ENCODE measurements at regions of chr22 and their contacts with region 1.

Region 1: GRCh38 chr22:34914846-34915245 is 151.1 kb upstream of the ISX start:
- DNase-seq: no peak
- ATAC-seq: no peak
- H3K4me3 ChIP-seq: no peak overlapping the region
- H3K27ac ChIP-seq: no peak overlapping the region
- H3K4me1 ChIP-seq: no peaks in the 10 kb centered on the region
- H3K27me3 ChIP-seq: peaks cover 0 to 14% (median 5%) of the 10 kb centered on the region in 7 donors
- CTCF ChIP-seq: no peak

Region 2: DNA sequence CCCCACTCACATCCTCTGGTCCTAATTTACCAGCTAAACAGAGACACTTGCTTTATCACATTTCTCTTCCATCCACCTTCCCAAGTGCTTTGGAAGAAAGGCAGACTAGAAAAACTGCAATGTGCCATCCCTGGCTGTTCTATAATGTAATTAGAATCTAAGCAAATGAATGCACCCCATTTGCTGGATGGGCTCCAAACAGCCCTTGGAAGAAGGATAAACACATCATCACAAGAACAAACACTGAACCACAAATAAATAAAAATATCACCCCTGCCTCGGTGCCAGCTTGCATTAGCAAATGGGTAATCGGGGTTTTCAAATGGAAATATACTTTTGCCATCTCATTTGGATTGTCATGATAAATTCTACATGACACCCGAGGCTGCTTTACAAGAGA is 145.5 kb before region 1 on chr22:
- intact Hi-C with region 1: no loop called
- DNase-seq: no peak
- ATAC-seq: no peak
- H3K4me3 ChIP-seq: no peak overlapping the region
- H3K27ac ChIP-seq: no peak overlapping the region
- H3K4me1 ChIP-seq: no peaks in the 10 kb centered on the region
- H3K27me3 ChIP-seq: peaks cover 0 to 19% (median 4%) of the 10 kb centered on the region in 7 donors
- CTCF ChIP-seq: no peak

Region 3: DNA sequence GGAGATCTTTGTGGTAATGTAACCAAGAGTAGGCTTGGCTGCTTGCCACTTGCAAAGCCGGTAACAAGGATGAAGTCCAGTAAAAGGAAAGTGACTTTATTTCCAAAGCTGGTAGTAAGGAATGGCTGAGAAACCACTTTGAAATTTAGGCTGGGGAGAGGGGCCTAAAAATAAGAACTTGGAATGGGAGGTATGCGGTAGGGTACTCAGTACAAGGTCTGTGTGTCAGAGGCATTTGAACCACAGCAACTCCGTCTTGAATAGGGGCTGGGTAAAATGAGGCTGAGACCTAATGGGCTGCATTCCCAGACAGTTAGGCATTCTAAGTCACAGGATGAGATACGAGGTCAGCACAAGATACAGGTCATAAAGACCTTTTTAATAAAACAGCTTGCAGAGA is 64.8 kb before region 1 on chr22:
- intact Hi-C with region 1: no loop called
- DNase-seq: no peak
- ATAC-seq: no peak
- H3K4me3 ChIP-seq: no peak overlapping the region
- H3K27ac ChIP-seq: no peak overlapping the region
- H3K4me1 ChIP-seq: no peaks in the 10 kb centered on the region
- H3K27me3 ChIP-seq: peaks cover 0 to 15% (median 4%) of the 10 kb centered on the region in 7 donors
- CTCF ChIP-seq: no peak

Region 4: DNA sequence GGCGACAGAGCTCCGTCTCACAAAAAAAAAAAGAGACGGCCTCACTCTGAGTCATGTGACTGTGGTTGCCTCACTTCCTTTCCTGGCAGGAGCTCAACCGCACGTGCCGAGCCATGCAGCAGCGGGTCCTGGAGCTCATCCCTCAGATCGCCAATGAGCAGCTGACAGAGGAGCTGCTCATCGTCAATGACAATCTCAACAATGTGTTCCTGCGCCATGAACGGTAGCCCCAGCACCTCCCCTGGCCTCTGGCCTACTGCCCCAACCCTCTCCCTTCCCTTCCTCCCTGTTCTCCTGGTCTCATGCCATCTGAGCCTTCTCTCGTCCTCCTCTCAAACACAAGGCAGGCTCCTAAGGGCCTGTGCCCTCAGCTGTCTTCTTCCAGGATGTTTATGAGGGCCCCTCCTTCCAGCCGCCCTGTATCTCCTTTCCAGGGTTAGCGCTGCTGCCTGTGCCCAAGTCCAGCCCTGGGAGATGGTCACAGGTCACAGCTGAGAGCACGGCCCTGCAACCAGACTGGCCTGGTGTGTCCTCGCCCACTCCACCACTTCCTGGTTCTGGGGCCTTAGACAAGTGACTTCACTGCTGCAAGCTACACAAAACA is 415.5 kb after region 1 on chr22:
- intact Hi-C with region 1: no loop called
- DNase-seq: peak; percentile 85 to 87
- ATAC-seq: peak; percentile 70 to 90 (median 86)
- H3K4me3 ChIP-seq: peak overlapping the region in 1 of 10 donors; percentile 2
- H3K27ac ChIP-seq: peak overlapping the region in 9 of 10 donors; percentile 47 to 82 (median 70)
- H3K4me1 ChIP-seq: peaks cover 0 to 57% (median 30%) of the 10 kb centered on the region in 9 donors
- H3K27me3 ChIP-seq: no peaks in the 10 kb centered on the region
- CTCF ChIP-seq: no peak

Region 5: GRCh38 chr22:35498026-35498800 is 583.4 kb after region 1 on chr22:
- intact Hi-C with region 1: loop called in 1 of 10 experiments (anchors 5 kb)
- DNase-seq: no peak
- ATAC-seq: no peak
- H3K4me3 ChIP-seq: no peak overlapping the region
- H3K27ac ChIP-seq: no peak overlapping the region
- H3K4me1 ChIP-seq: no peaks in the 10 kb centered on the region
- H3K27me3 ChIP-seq: peaks cover 0 to 43% (median 12%) of the 10 kb centered on the region in 7 donors
- CTCF ChIP-seq: no peak